H1 (cell line): ENCODE measurements at regions of chr12 and their contacts with region 1.

Region 1: GRCh38 chr12:2834581-2835491 is at the start of gene NRIP2:
- DNase-seq: peak in 1 of 2 experiments; percentile 65
- H3K4me3 ChIP-seq: peak within 1 kb of the TSS in 1 of 4 experiments; percentile 29; a peak in 2 of 8 replicates
- H3K27ac ChIP-seq: no peak within 1 kb of the TSS
- H3K4me1 ChIP-seq: peaks cover 0 to 14% (median 9%) of the 10 kb centered on the region in 4 experiments; a peak in 6 of 7 replicates
- H3K27me3 ChIP-seq: no peaks in the 10 kb centered on the region; a peak in 1 of 7 replicates
- CTCF ChIP-seq: no peak
- EP300 ChIP-seq: no peak
- POLR2A ChIP-seq: no peak
- RAD21 ChIP-seq: 0 out of 4 replicates have a peak, but pooled peaks of 1 of the 2 experiments have one; percentile 2
- total RNA-seq, gene NRIP2: not detected in 2 replicates

Region 2: GRCh38 chr12:2759733-2760132 is 75.1 kb before region 1 on chr12:
- CTCF ChIA-PET with region 1: no interaction called
- POLR2A ChIA-PET with region 1: no interaction called
- DNase-seq: no peak
- H3K4me3 ChIP-seq: no peak overlapping the region
- H3K27ac ChIP-seq: no peak overlapping the region
- H3K4me1 ChIP-seq: peaks cover 0 to 2% (median 0%) of the 10 kb centered on the region in 4 experiments; a peak in 3 of 7 replicates
- H3K27me3 ChIP-seq: peaks cover 0 to 1% (median 0%) of the 10 kb centered on the region in 4 experiments; a peak in 1 of 7 replicates
- CTCF ChIP-seq: no peak
- EP300 ChIP-seq: no peak
- POLR2A ChIP-seq: no peak
- RAD21 ChIP-seq: no peak

Region 3: GRCh38 chr12:2845280-2845679 is 10.4 kb after region 1 on chr12:
- CTCF ChIA-PET with region 1: interaction called, 52 read pairs
- POLR2A ChIA-PET with region 1: interaction called, 31 read pairs
- DNase-seq: no peak
- H3K4me3 ChIP-seq: no peak overlapping the region
- H3K27ac ChIP-seq: no peak overlapping the region
- H3K4me1 ChIP-seq: peaks cover 0 to 4% (median 3%) of the 10 kb centered on the region in 4 experiments; a peak in 6 of 7 replicates
- H3K27me3 ChIP-seq: no peaks in the 10 kb centered on the region
- CTCF ChIP-seq: no peak
- EP300 ChIP-seq: no peak
- POLR2A ChIP-seq: no peak
- RAD21 ChIP-seq: no peak

Region 4: GRCh38 chr12:2853626-2854025 is 18.8 kb after region 1 on chr12:
- CTCF ChIA-PET with region 1: interaction called, 16 read pairs
- POLR2A ChIA-PET with region 1: interaction called, 11 read pairs
- DNase-seq: peak; percentile 82 to 98
- H3K4me3 ChIP-seq: no peak overlapping the region
- H3K27ac ChIP-seq: no peak overlapping the region
- H3K4me1 ChIP-seq: peaks cover 0 to 6% (median under 1%) of the 10 kb centered on the region in 4 experiments; a peak in 4 of 7 replicates
- H3K27me3 ChIP-seq: no peaks in the 10 kb centered on the region
- CTCF ChIP-seq: peak; percentile 91 to 97 (median 93)
- EP300 ChIP-seq: peak in 1 of 2 experiments; percentile 20; a peak in 1 of 3 replicates
- POLR2A ChIP-seq: no peak
- RAD21 ChIP-seq: peak; percentile 68 to 73